Activated T-helper 1 cell treated with anti-CD3 and anti-CD28 coated beads, Interleukin-12 subunit alpha, Interleukin-12 subunit beta, Interleukin-2, Interleukin-4 antibody, amounts not matched to agents 30 ng/mL and 10 ng/mL and 1 ng/mL, durations not matched to agents 14 hours and 24 hours and 36 hours (primary cell): ENCODE measurements at regions of chr1 and their contacts with region 1.

Region 1: DNA sequence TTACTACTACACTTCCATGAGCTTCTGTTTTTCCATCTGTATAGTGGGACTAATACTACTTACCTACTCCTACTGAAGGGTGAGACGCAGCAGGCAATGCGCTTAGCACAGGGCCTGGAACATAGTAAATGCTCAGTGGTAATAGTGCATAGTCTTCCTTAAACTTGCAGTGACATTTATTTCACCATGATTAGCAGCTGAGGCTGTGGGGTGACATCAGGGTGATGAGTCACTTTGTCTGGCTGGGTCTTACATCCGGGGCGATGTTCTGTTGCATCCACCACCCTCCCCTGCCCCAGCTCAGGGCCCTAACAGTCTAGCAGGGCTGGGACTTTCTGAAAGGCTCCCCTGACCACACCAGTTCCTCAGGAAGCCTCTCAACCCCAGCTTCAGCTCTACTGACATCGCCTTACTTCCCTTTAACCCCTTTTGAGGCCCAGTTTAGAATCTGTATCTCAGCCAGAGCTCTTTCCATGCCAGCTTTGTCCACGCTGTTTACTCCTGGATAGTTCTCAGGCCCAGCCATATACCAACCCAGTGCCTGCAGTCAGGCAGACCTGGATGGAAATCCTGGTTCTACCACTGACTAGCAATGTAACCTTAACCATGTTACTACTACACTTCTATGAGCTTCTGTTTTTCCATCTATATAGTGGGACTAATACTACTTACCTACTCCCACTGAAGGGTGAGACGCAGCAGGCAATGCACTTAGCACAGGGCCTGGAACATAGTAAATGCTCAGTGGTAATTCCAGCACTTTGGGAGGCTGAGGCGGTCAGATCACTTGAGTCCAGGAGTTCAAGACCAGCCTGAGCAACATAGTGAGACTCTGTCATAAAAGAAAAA is 66.3 kb downstream of the CD58 start:
- DNase-seq: peak; percentile 86
- H3K4me3 Mint-ChIP-seq: peak overlapping the region; percentile 3
- H3K27ac Mint-ChIP-seq: peak overlapping the region; percentile 88
- H3K4me1 Mint-ChIP-seq: peaks cover 91% of the 10 kb centered on the region
- H3K27me3 Mint-ChIP-seq: no peaks in the 10 kb centered on the region

Region 2: DNA sequence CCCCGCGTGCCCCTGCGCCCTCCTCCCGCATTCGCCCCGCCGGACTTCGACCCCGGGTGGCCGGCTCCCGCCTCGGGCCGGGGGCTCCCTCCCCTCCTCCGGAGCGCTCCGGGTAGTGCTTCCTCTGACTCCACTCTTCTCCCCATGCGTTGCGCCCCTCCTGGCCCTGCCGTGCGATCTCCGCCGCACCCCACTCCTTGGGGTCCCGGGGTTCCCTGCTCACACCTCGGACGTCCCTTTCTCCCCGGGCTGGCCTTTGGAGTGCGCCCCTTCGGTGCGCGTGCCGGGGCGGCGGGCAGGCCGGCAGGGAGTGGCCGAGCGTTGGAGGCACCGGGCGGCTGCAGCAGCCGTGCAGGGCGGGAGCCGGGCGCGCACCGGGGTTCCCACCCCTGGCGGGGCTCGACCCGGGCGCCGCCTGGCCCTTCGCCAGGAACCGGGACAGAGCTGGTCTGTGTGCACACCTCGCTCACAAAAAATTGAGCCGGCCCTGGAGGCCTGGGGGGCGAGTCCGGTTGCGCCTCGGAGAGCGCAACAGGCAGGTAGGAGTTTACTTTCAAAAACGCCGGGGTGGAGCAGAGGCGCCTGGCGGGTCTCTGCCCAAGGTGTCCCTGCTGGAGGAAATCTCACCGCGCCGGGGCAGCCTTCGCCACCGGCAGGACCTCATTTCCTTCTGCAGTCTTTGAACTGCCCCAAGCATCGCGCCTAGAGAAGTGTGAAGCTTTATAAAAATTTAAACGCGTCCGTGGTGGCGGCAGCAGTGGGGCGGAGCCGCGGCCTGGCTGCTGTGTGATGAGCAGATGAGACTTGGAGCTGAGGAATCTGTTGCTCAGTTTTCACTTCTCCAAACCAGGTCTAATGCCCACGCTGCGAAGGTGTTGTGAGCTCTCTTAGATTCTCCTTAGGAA is 862.1 kb before region 1 on chr1:
- intact Hi-C with region 1: loop called (anchors 10 kb)
- DNase-seq: peak; percentile 27
- H3K4me3 Mint-ChIP-seq: peak overlapping the region; percentile 87
- H3K27ac Mint-ChIP-seq: peak overlapping the region; percentile 48
- H3K4me1 Mint-ChIP-seq: peaks cover 16% of the 10 kb centered on the region
- H3K27me3 Mint-ChIP-seq: peaks cover 23% of the 10 kb centered on the region

Region 3: DNA sequence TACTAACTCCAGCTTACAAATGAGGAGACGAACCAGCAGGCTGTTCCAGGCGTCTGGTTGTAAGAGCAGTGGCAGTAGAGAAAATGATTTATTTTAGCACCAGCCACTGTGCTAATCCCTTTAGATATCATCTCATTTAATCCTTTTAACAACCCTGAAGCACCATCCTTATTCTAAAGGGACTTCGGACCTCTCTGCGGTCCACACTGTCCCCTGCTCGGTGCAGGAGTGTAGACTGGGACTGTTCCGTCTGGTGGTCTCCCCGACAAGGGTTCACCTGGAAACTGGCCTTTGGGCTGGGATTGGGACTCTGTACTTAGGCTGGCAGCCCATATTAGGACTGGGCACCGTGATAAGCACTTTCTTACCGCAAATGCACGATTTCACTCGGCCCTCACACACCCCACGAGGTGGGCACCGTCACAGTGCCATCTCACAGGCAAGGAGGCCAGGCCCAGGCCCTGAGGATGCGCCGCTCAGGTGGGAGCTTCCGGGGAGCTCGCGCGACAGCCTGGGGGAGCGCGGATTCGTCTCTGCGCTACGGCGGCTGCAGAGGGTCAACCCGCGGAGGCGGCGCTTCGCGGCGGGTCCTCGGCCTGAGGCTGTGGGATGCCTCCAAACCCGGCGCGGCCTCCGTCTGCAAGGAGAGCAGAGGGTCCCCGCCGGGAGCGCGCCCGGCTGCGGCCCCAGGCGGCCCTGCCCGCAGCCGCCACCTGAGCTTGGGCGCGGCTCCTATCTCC is 86.3 kb before region 1 on chr1:
- intact Hi-C with region 1: loop called (anchors 5 kb)
- DNase-seq: peak; percentile 84
- H3K4me3 Mint-ChIP-seq: peak overlapping the region; percentile 90
- H3K27ac Mint-ChIP-seq: peak overlapping the region; percentile 83
- H3K4me1 Mint-ChIP-seq: peaks cover 60% of the 10 kb centered on the region
- H3K27me3 Mint-ChIP-seq: peaks cover 6% of the 10 kb centered on the region

Region 4: DNA sequence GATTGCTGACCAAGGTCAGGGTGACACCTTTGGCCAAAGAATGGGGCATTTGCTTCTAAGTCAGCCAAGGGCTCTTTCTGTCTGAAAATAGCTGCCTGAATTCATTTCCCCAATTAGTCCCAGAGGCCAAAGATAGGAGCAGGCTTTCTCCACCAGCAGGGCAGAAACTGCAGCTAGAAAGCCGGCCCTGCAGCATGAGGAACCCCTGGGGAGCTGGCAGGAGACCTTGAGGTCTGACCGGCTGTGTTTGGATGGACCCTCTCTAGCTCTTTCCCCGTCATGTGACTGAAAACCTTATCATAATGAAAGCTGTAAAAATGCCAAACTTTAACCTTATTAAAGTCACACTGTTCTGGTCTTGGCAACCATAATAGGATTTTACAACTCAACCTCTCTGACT is 27.1 kb before region 1 on chr1:
- intact Hi-C with region 1: no loop called
- DNase-seq: no peak
- H3K4me3 Mint-ChIP-seq: no peak overlapping the region
- H3K27ac Mint-ChIP-seq: no peak overlapping the region
- H3K4me1 Mint-ChIP-seq: no peaks in the 10 kb centered on the region
- H3K27me3 Mint-ChIP-seq: no peaks in the 10 kb centered on the region

Region 5: DNA sequence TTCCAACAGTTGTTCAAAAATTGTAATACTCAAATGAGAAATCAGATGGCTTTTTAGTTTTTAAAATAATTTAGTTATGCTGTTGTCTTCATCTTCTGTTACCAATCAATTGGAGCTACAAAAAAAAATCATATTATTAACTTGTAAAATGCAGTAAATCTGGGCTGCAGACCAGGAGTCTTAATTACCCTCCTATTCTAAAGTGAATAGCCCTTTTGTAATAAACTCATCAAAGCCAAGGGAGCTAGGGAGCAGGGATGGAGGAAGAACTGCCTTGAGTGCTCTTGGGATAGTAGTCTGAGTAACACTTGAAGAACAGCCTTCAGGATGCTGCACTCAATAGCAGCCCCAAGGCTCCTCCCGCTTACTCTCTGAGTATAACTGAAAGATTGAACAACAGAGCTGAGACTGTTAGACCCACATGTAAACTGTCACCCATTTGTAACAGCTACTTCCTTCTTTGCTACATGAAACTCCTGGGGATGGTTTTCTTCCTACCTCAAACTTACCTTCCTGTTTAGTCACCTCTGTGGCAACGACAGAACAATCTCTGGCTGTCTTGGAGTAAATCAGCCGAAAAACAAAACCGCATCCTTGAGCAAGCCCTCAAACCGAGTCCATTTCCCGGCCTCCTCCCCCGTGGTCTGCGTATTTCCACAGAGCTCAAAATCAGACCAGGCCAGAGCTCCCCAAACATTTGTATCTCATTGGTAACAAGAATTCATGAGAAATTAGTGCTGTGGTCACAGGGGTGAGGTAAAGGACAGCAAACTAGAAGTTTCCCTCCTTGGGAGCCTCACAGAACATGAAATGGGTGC is 10.4 kb after region 1 on chr1:
- intact Hi-C with region 1: loop called (anchors 1 kb)
- DNase-seq: peak; percentile 74
- H3K4me3 Mint-ChIP-seq: peak overlapping the region; percentile 75
- H3K27ac Mint-ChIP-seq: peak overlapping the region; percentile 97
- H3K4me1 Mint-ChIP-seq: peaks cover 80% of the 10 kb centered on the region
- H3K27me3 Mint-ChIP-seq: no peaks in the 10 kb centered on the region

Region 6: DNA sequence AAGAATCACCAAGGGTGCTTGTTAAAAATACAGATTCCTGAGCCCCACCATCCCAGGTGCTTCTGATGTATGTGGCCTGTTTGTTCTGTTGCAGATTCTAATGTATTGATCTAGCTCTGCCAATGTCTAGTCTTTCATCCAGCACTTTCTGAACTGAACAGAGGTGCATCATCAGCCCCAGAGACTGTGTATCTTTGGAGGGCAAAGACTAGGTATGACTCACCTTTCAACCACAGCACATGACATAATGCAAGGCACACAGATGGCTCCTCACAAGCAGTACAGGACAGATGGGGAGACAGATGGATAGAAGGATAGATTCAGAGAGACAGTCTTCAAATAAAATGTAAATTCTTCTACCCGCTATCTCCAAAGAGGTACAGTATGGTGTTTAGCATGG is 34.0 kb after region 1 on chr1:
- intact Hi-C with region 1: loop called (anchors 1 kb)
- DNase-seq: peak; percentile 51
- H3K4me3 Mint-ChIP-seq: peak overlapping the region; percentile 28
- H3K27ac Mint-ChIP-seq: peak overlapping the region; percentile 79
- H3K4me1 Mint-ChIP-seq: peaks cover 68% of the 10 kb centered on the region
- H3K27me3 Mint-ChIP-seq: no peaks in the 10 kb centered on the region

Region 7: DNA sequence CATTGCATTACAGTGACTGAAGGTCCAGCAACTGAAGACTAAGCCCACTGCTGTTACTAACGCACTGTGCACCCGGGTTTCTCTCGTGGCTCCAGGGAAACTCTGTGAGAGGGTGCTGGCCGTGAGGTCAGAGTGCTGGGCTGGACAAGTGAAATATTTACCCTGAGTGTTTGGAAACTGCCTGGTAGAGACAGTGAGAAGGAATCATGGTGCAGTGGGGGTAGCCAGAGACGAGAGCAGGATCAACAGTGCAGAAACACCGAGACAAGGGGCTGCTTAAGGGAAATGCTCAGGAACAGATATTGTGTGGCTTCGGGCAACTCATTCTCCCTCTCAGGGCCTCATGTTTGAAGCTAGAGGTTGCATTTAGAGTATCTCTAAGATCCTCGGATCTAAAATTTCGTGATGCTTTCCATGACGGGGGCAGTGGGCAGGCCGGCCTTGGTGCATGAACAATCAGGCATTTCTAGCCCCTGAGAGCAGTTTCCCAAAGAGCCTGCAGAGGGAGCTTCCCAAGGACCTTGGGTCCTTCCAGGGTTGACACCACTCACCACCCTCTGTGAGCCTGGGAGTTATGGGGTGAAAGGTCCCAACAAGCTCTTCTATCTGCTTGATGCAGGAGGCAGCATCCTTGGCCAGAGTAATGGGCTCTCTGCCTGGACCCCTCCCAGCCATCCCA is 259.4 kb after region 1 on chr1:
- intact Hi-C with region 1: loop called (anchors 10 kb)
- DNase-seq: peak; percentile 50
- H3K4me3 Mint-ChIP-seq: peak overlapping the region; percentile 84
- H3K27ac Mint-ChIP-seq: peak overlapping the region; percentile 100
- H3K4me1 Mint-ChIP-seq: peaks cover 95% of the 10 kb centered on the region
- H3K27me3 Mint-ChIP-seq: peaks cover 3% of the 10 kb centered on the region

Region 8: DNA sequence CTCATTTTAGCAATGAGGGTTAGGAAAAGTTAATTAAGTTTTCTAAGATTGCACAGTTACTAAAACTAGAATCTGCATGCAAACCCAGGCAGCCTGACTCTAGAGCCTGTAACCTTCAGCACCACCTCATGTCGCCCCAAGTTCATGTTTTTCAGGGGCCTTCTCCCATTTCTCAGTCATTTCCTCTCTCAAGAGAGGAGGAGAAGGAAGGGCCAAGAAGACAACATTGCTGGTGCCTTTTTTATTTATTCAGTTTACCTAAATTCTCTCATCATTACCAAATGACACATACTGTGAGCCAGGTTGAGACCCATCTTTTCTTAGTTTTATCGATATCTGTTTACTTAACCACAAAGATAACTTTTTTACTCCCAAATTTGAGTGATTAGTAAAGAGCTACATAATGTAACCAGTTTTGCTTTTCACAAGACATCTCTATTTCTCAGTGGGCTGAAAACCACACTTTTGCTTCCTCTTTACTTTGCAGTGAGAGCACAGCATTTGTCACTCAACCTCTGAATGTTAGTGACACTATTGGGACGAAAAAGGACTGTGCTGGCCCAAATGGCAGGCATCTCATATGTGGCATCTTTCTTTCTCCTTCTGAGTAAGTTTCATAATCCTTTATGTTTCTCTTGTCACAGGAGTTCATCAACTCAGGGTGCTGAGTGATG is 496.9 kb after region 1 on chr1 and contains the start of gene CD101:
- intact Hi-C with region 1: loop called (anchors 2 kb)
- DNase-seq: no peak
- H3K4me3 Mint-ChIP-seq: peak within 1 kb of the TSS; percentile 3
- H3K27ac Mint-ChIP-seq: peak within 1 kb of the TSS; percentile 79
- H3K4me1 Mint-ChIP-seq: peaks cover 36% of the 10 kb centered on the region
- H3K27me3 Mint-ChIP-seq: peaks cover 3% of the 10 kb centered on the region
- total RNA-seq, gene CD101: 0.80 and 1.0 TPM in 2 replicates